K562 (cell line): ENCODE measurements at regions of chr6 and their contacts with region 1.

Region 1: GRCh38 chr6:5398530-5398929 is 137.2 kb downstream of the FARS2 start:
- DNase-seq: peak; percentile 32 to 67 (median 43)
- ATAC-seq: peak; percentile 93
- H3K4me3 ChIP-seq: no peak overlapping the region
- H3K27ac ChIP-seq: no peak overlapping the region
- H3K4me1 ChIP-seq: 0 out of 5 replicates have a peak, but pooled peaks cover 0 to 4% of the 10 kb centered on the region in 2 experiments
- H3K27me3 ChIP-seq: no peaks in the 10 kb centered on the region
- CTCF ChIP-seq: peak; percentile 47 to 77 (median 59); a peak in 5 of 6 replicates
- EP300 ChIP-seq: no peak
- POLR2A ChIP-seq: no peak
- RAD21 ChIP-seq: peak; percentile 62 to 82

Region 2: DNA sequence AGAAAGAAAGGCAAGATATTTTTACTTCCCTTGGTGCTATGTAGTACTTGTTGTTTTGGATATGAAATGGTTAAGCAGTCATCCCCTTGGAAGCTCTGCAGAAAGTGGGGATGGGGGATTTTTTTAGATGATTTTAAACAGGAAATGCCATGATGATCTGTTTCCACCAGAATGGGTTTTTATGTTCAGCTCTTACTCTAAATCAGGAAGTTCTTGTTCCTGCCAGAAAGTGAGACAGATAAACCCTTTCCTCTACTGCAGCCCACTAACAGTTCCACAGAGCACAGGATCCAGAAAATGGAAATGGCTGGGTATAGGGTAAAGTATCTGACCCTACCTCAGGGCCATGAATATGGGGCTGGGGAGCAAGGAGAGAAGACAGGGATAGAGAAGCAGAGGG is 345.5 kb before region 1 on chr6:
- CTCF ChIA-PET with region 1: interaction called, 12 read pairs
- POLR2A ChIA-PET with region 1: no interaction called
- in situ Hi-C with region 1: no loop called
- intact Hi-C with region 1: loop called (anchors 1 kb)
- DNase-seq: no peak
- ATAC-seq: no peak
- H3K4me3 ChIP-seq: no peak overlapping the region
- H3K27ac ChIP-seq: no peak overlapping the region
- H3K4me1 ChIP-seq: no peaks in the 10 kb centered on the region
- H3K27me3 ChIP-seq: peaks cover 0 to 9% of the 10 kb centered on the region in 2 experiments; a peak in 3 of 5 replicates
- CTCF ChIP-seq: no peak
- EP300 ChIP-seq: no peak
- POLR2A ChIP-seq: no peak
- RAD21 ChIP-seq: no peak

Region 3: DNA sequence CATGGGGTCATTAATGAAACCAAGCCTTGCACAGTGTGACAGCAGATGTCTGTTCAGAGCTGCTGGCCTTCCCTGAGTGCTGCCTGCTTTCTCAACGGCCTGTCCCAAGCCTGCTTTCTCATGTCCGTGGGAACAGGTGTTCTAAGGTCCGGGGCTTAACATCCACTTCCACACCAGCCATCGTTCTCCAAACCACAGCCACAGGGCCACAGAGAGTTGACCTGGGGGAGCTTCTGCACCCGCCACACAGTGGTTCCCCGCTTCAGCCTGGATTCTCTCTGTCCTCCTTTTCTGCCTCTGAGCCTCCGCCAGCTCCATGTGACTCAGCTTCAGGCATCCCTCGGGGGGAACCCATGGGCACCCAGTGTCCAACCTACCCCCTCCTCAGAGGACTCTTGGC is 340.3 kb before region 1 on chr6:
- CTCF ChIA-PET with region 1: interaction called, 12 read pairs
- POLR2A ChIA-PET with region 1: no interaction called
- in situ Hi-C with region 1: no loop called
- intact Hi-C with region 1: loop called (anchors 1 kb)
- DNase-seq: no peak
- ATAC-seq: peak; percentile 51
- H3K4me3 ChIP-seq: no peak overlapping the region
- H3K27ac ChIP-seq: no peak overlapping the region
- H3K4me1 ChIP-seq: no peaks in the 10 kb centered on the region
- H3K27me3 ChIP-seq: peaks cover 11 to 23% of the 10 kb centered on the region in 2 experiments; a peak in 4 of 5 replicates
- CTCF ChIP-seq: no peak
- EP300 ChIP-seq: no peak
- POLR2A ChIP-seq: no peak
- RAD21 ChIP-seq: no peak

Region 4: GRCh38 chr6:5343998-5344397 is 54.5 kb before region 1 on chr6:
- CTCF ChIA-PET with region 1: no interaction called
- POLR2A ChIA-PET with region 1: no interaction called
- in situ Hi-C with region 1: no loop called
- intact Hi-C with region 1: no loop called
- DNase-seq: peak in 1 of 4 experiments; percentile 5
- ATAC-seq: no peak
- H3K4me3 ChIP-seq: no peak overlapping the region
- H3K27ac ChIP-seq: no peak overlapping the region
- H3K4me1 ChIP-seq: no peaks in the 10 kb centered on the region
- H3K27me3 ChIP-seq: no peaks in the 10 kb centered on the region
- CTCF ChIP-seq: no peak
- EP300 ChIP-seq: no peak
- POLR2A ChIP-seq: no peak
- RAD21 ChIP-seq: no peak

Region 5: GRCh38 chr6:5361396-5361795 is 37.1 kb before region 1 on chr6:
- CTCF ChIA-PET with region 1: no interaction called
- POLR2A ChIA-PET with region 1: no interaction called
- in situ Hi-C with region 1: no loop called
- intact Hi-C with region 1: no loop called
- DNase-seq: no peak
- ATAC-seq: no peak
- H3K4me3 ChIP-seq: no peak overlapping the region
- H3K27ac ChIP-seq: no peak overlapping the region
- H3K4me1 ChIP-seq: peaks cover 3 to 5% of the 10 kb centered on the region in 2 experiments; a peak in 2 of 5 replicates
- H3K27me3 ChIP-seq: no peaks in the 10 kb centered on the region
- CTCF ChIP-seq: no peak
- EP300 ChIP-seq: no peak
- POLR2A ChIP-seq: no peak
- RAD21 ChIP-seq: no peak

Region 6: DNA sequence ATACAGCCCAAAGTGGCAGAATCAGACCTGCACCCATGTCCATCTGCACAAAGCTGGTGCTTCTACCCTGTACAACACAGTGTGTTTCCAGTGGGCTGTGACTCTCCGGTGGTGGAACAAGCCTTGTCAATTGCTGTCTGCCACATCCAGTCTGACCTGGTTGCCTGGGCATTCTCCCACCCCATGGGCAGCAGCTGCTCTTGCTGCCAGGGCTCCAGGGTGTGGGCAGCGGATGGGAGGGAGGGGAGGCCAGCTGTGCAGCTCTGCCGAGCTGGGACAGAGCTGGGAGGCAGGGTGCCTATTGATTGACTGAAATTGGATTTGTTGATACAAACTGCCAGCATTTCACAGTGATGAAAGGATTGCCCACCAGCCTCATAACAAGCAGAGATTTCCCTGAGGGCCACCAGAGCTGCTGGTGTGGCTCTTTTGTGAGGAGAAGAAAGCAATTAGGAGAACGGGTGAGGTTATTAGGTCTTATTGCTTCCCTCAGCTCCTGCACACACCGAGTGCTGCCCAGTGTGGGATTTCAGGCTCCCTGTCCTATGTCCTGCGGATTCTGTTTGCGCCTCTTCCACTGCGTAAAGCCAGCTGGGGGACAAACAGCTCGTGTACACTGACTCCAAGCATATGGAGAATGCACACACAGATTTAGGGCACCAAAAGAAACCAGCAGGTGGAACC is 457.4 kb after region 1 on chr6:
- CTCF ChIA-PET with region 1: no interaction called
- POLR2A ChIA-PET with region 1: no interaction called
- in situ Hi-C with region 1: no loop called
- intact Hi-C with region 1: no loop called
- DNase-seq: no peak
- ATAC-seq: no peak
- H3K4me3 ChIP-seq: no peak overlapping the region
- H3K27ac ChIP-seq: no peak overlapping the region
- H3K4me1 ChIP-seq: peaks cover 0 to 5% of the 10 kb centered on the region in 2 experiments; a peak in 1 of 5 replicates
- H3K27me3 ChIP-seq: peaks cover 15 to 33% of the 10 kb centered on the region in 2 experiments; a peak in 4 of 5 replicates
- CTCF ChIP-seq: no peak
- EP300 ChIP-seq: no peak
- POLR2A ChIP-seq: no peak
- RAD21 ChIP-seq: no peak